B cell (primary cell): ENCODE measurements at regions of chr19 and their contacts with region 1.

Region 1: DNA sequence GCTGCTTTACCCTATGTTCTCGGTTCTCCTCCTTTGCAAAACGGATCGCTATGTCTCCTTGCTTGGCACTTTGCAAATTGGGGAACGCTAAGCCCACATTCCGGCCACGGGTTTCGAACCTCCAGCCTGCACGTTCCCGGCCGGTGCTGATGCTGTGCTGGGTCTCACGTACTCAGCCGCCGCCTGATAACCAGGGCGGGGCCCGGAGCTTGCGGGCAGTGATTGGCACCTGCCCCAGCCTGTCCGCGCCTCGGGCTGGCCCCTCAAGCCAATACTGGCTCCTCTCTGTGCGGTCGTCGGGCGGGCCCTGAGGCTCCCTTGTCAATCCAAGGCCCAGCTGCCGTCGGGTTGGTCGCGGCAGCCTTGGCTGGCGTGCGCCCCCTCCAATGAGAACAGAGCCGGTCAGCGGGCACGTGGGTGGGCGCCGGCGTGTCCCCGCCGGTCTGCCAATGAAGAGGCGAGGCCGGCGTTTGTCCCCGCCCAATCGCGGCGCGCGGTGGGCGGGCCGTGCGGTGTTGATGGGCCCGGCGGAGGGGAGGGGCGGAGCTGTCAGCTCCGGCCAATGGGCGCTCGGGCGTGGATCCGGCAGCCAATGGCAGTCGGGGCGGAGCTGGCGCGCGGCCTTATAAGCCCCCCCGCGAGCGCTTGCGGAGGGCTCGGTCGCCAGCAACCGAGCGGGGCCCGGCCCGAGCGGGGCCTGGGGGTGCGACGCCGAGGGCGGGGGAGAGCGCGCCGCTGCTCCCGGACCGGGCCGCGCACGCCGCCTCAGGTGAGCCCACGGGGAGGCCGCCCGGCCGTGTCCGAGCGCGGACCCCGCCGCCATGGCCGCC is at the start of gene KDM4B:
- DNase-seq: peak; percentile 100
- ATAC-seq: peak; percentile 89
- H3K4me3 ChIP-seq: peak within 1 kb of the TSS; percentile 41 to 67 (median 56)
- H3K4me3 Mint-ChIP-seq: peak within 1 kb of the TSS; percentile 89
- H3K27ac ChIP-seq: peak within 1 kb of the TSS; percentile 56 to 58
- H3K27ac Mint-ChIP-seq: peak within 1 kb of the TSS; percentile 92
- H3K4me1 ChIP-seq: peaks cover 27 to 34% of the 10 kb centered on the region in 2 donors
- H3K4me1 Mint-ChIP-seq: peaks cover 30% of the 10 kb centered on the region
- H3K27me3 ChIP-seq: no peaks in the 10 kb centered on the region
- H3K27me3 Mint-ChIP-seq: no peaks in the 10 kb centered on the region
- CTCF ChIP-seq: no peak
- total RNA-seq, gene KDM4B: 202 and 205 TPM in 2 replicates

Region 2: DNA sequence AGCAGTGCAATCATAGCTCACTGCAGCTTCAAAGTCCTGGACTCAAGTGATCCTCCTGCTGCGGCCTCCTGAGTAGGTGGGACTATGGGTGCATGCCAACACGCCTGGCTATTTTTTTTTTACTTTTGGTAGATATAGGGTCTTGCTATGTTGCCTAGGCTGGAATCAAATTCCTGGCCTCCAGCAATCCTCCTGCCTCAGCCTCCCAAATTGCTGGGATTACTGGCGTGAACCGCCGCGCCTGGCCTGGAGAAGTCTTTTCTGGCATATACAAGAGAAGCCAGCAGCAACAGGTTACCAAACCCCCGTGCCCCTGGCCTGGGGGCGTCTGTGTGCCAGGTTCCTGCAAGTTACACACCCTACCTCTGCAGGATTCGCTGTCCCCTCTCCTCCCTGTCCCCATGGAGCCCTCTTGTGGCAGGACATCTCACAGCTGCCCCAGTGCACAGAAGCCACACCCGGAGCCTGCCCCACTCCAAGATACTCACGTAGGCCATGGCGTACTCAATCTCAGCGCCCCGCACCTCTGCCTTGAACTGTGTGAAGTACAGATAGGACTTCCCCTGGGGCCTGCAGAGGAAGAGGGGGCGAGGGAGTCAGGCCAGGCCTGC is 308.4 kb before region 1 on chr19:
- CTCF ChIA-PET with region 1: no interaction called
- POLR2A ChIA-PET with region 1: no interaction called
- intact Hi-C with region 1: no loop called
- DNase-seq: no peak
- ATAC-seq: no peak
- H3K4me3 ChIP-seq: no peak overlapping the region
- H3K4me3 Mint-ChIP-seq: no peak overlapping the region
- H3K27ac ChIP-seq: no peak overlapping the region
- H3K27ac Mint-ChIP-seq: peak overlapping the region; percentile 26
- H3K4me1 ChIP-seq: no peaks in the 10 kb centered on the region
- H3K4me1 Mint-ChIP-seq: no peaks in the 10 kb centered on the region
- H3K27me3 ChIP-seq: no peaks in the 10 kb centered on the region
- H3K27me3 Mint-ChIP-seq: no peaks in the 10 kb centered on the region
- CTCF ChIP-seq: no peak

Region 3: DNA sequence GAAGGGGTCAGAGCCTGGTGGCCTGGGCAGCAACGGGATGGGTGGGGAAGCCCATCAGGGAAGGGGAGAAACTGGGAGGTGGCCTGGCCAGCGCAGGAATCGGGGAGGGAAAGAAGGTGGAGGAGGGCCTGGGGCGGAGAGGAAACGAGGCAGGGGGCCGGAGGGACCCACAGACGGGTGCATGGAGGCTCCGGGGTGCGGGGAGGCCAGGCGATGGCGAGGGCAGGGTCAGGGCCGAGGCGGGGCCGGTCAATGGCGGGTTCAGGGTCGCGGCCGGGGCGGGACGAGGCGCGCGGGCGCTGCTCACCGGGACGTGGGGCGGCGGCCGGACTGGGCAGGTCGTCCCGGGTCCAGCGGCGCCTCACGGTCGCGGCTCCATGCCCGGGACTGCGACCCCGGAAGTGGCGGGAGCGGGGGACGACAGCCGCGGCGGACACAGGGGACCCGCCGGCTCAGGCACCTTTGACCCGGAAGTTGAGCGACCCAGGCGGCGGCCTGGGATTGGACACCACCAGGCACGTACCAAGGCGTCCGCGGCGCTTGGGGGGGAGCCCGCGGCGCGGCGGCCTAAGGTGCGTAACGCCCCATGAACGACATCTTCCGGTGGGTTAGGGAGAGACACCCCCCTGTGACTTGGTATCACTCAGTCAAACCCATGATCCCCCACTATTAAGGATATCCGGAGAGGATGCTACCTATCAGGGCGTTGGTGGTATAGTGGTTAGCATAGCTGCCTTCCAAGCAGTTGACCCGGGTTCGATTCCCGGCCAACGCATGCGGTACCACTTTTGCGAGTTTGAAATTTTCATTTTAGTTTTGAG is 245.1 kb before region 1 on chr19 and contains the start of gene DPP9:
- CTCF ChIA-PET with region 1: no interaction called
- POLR2A ChIA-PET with region 1: interaction called, 5 read pairs
- intact Hi-C with region 1: loop called (anchors 2 kb)
- DNase-seq: peak; percentile 100
- ATAC-seq: peak; percentile 94
- H3K4me3 ChIP-seq: peak within 1 kb of the TSS; percentile 71 to 97 (median 91)
- H3K4me3 Mint-ChIP-seq: peak within 1 kb of the TSS; percentile 97
- H3K27ac ChIP-seq: peak within 1 kb of the TSS; percentile 63 to 89
- H3K27ac Mint-ChIP-seq: peak within 1 kb of the TSS; percentile 98
- H3K4me1 ChIP-seq: peaks cover 20 to 26% of the 10 kb centered on the region in 2 donors
- H3K4me1 Mint-ChIP-seq: peaks cover 45% of the 10 kb centered on the region
- H3K27me3 ChIP-seq: no peaks in the 10 kb centered on the region
- H3K27me3 Mint-ChIP-seq: peaks cover 3% of the 10 kb centered on the region
- CTCF ChIP-seq: no peak
- total RNA-seq, gene DPP9: 109 and 115 TPM in 2 replicates

Region 4: GRCh38 chr19:4867534-4868285 is 101.0 kb before region 1 on chr19 and contains the start of gene PLIN3:
- CTCF ChIA-PET with region 1: interaction called, 5 read pairs
- POLR2A ChIA-PET with region 1: interaction called, 6 read pairs
- intact Hi-C with region 1: loop called (anchors 2 kb)
- DNase-seq: peak; percentile 94
- ATAC-seq: peak; percentile 95
- H3K4me3 ChIP-seq: peak within 1 kb of the TSS; percentile 66 to 87 (median 80)
- H3K4me3 Mint-ChIP-seq: peak within 1 kb of the TSS; percentile 88
- H3K27ac ChIP-seq: peak within 1 kb of the TSS; percentile 56 to 77
- H3K27ac Mint-ChIP-seq: peak within 1 kb of the TSS; percentile 82
- H3K4me1 ChIP-seq: peaks cover 6 to 28% of the 10 kb centered on the region in 2 donors
- H3K4me1 Mint-ChIP-seq: peaks cover 22% of the 10 kb centered on the region
- H3K27me3 ChIP-seq: no peaks in the 10 kb centered on the region
- H3K27me3 Mint-ChIP-seq: peaks cover 2% of the 10 kb centered on the region
- CTCF ChIP-seq: no peak
- total RNA-seq, gene PLIN3: 26.5 and 34.3 TPM in 2 replicates

Region 5: DNA sequence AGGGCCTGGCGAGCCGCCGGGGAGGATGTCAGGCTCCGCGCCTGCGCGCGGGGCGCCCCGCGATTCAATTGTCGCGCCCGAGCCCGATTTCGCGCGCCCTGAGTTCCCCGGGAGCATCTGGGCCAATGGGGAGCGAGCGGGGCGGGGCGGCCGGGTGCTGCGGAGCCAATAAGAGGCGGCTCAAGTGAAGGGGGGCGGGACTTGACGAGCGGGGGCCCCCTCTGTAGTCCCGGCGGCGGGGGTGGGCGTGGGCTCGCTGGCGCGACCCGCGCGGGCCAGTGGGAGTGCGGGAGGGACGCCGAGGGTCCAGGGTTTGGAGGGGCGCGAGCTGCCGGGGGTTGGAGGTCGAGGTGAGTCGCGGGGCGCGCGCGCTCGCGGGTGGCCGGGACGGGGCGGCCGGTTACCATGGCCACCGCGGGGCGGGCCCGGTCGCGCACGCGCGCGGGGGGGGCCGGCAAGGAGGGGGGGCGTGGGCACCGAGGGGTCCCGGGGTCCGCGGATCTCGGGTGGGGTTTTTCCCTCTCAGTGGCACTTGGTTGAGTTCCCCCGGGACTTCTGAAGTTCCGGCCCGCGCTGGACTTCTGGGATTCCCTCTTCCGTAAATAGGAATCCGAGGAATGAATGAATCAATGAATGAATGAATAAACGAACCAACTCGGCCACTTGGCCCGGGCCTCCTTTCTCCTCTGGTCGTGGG is 58.6 kb before region 1 on chr19:
- CTCF ChIA-PET with region 1: interaction called, 5 read pairs
- POLR2A ChIA-PET with region 1: interaction called, 7 read pairs
- intact Hi-C with region 1: loop called (anchors 1 kb)
- DNase-seq: peak; percentile 95
- ATAC-seq: peak; percentile 97
- H3K4me3 ChIP-seq: peak overlapping the region; percentile 40 to 73 (median 62)
- H3K4me3 Mint-ChIP-seq: peak overlapping the region; percentile 93
- H3K27ac ChIP-seq: no peak overlapping the region
- H3K27ac Mint-ChIP-seq: peak overlapping the region; percentile 59
- H3K4me1 ChIP-seq: peaks cover 48 to 57% of the 10 kb centered on the region in 2 donors
- H3K4me1 Mint-ChIP-seq: peaks cover 55% of the 10 kb centered on the region
- H3K27me3 ChIP-seq: peaks cover 0 to 3% (median 0%) of the 10 kb centered on the region in 4 experiments
- H3K27me3 Mint-ChIP-seq: no peaks in the 10 kb centered on the region
- CTCF ChIP-seq: no peak

Region 6: DNA sequence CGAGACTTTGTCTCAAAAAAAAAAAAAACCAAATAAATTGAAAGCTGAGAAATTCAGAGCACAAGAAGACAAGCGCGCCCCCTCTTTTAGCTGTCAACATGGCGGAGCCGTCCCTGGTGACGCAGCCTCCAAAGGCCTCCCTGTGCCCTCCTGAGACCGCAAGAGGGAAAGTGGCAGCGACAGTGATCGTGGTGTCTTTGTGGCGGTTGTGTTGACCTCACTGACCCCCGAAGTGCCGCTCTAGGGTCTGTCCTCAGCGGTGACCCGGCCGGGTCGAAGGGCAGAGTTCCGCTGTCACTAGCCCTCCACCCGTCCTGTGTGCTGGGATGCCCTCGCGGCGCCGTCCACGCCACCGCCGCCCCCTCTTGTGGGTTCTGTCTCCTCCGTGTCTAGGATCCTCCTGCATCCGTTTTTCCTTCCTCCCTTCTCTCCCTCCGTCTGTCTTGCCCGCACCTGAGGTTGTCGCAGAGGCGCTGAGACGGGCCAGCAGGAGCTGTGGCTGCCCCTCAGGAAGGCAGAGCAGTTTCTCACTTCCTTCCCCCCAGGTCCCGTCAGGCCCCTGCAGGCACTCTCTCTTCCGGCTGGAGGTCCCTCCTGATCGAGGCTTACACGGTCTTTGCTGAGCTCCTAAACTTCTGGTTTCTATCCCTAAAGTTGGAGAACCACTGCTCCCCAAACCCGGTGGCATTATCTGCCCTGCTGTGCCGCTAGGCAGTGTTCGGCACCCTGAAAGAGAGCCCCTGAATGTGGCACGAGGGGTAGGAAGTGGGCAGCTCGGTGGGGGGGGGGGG is 52.2 kb before region 1 on chr19:
- CTCF ChIA-PET with region 1: interaction called, 5 read pairs
- POLR2A ChIA-PET with region 1: interaction called, 7 read pairs
- intact Hi-C with region 1: loop called (anchors 1 kb)
- DNase-seq: peak; percentile 73
- ATAC-seq: peak; percentile 66
- H3K4me3 ChIP-seq: peak overlapping the region; percentile 51 to 86 (median 81)
- H3K4me3 Mint-ChIP-seq: peak overlapping the region; percentile 99
- H3K27ac ChIP-seq: peak overlapping the region; percentile 40 to 87
- H3K27ac Mint-ChIP-seq: peak overlapping the region; percentile 97
- H3K4me1 ChIP-seq: peaks cover 35 to 50% of the 10 kb centered on the region in 2 donors
- H3K4me1 Mint-ChIP-seq: peaks cover 47% of the 10 kb centered on the region
- H3K27me3 ChIP-seq: no peaks in the 10 kb centered on the region
- H3K27me3 Mint-ChIP-seq: no peaks in the 10 kb centered on the region
- CTCF ChIP-seq: no peak

Region 7: DNA sequence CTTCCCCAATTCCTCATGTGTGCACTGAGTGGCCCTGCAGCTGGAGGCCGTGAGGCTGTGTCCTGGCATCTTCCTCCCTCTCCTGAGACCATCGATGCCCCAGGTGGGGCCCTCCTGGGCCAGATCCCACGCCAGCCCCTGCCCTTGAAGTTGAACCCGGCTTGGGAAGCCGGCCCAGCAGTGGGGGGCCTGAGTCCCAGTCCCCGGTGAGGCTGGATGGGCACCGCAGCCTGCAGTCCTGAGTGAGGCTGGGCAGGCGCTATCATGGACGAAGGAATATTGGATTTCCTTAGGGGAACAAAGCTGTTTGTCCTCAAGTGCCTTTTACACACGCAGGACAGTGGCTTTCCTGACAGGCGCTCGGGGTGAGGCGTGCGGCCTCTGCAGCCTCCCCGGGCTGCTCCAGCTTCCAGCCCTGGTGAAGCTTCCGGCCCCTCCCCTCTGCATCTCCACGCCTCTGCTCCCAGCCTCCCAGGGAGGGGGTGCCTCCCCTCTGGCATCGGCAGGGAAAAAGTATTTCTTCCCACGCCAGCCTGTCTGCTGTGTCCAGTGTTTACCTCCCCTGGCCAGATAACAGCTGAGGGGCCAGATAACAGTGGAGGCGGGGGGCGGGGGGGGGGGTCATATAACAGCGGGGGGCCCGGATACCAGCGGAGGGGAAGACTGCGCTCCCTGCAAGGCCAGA is 159.7 kb after region 1 on chr19:
- CTCF ChIA-PET with region 1: interaction called, 3 read pairs
- POLR2A ChIA-PET with region 1: interaction called, 10 read pairs
- intact Hi-C with region 1: no loop called
- DNase-seq: no peak
- ATAC-seq: no peak
- H3K4me3 ChIP-seq: peak overlapping the region in 4 of 5 experiments; percentile 31 to 53 (median 34)
- H3K4me3 Mint-ChIP-seq: peak overlapping the region; percentile 84
- H3K27ac ChIP-seq: peak overlapping the region; percentile 100
- H3K27ac Mint-ChIP-seq: peak overlapping the region; percentile 97
- H3K4me1 ChIP-seq: peaks cover 72 to 85% of the 10 kb centered on the region in 2 donors
- H3K4me1 Mint-ChIP-seq: peaks cover 80% of the 10 kb centered on the region
- H3K27me3 ChIP-seq: no peaks in the 10 kb centered on the region
- H3K27me3 Mint-ChIP-seq: no peaks in the 10 kb centered on the region
- CTCF ChIP-seq: no peak